ENCODE measurements at regions of chr6 and their contacts with region 1.

Region 1: DNA sequence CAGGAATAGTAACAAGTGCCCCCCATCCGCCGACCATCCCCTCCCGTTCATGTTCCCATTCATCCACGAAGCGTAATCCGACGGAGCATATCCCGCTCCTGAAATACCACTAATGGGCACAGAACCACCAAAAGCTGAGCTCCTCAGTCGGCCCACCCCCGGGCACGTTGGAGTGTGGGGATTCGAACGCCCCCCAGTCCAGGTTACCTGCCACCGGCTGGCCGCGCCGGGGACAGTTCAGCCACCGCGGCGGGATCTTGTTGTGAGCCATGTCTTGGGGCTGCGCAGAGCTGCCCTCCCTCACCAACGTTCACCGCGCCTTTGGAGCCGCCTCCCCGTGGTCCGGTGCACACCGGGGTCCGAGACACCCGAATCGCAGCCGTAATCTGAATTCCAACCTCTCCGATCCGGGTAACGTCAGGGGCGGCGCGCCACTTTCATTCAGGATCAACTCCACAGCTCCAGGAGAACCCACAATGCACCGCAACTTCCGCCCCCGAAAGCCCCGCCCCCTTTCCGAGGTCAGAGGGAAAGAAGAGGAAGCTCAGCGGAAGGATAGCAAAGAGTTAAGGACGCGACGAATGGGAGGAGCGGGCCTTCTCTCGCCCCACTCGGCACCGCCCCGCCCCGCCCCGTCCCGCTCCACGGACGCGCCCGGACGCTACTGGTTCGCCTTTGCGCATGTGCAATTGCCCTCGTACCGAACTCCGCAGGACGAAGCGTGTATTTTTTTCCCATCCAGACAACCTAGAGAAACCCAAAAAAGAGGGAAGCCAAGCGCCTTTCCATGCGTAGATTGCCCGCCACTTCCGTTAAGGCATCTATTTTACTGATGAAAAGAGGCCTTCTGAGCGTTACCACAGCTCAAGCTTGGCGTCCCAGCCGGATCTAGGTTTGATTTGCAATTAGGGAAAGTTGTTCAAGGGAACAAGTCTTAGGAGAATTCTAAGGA is at the start of gene RNGTT:
- DNase-seq: peak; percentile 97
- ATAC-seq: peak; percentile 100
- H3K4me3 ChIP-seq: peak within 1 kb of the TSS; percentile 92 to 94 (median 94)
- H3K4me3 Mint-ChIP-seq: peak within 1 kb of the TSS; percentile 98
- H3K27ac ChIP-seq: peak within 1 kb of the TSS; percentile 64 to 87
- H3K27ac Mint-ChIP-seq: peak within 1 kb of the TSS; percentile 96
- H3K4me1 ChIP-seq: peaks cover 10 to 17% of the 10 kb centered on the region in 2 donors
- H3K4me1 Mint-ChIP-seq: peaks cover 34% of the 10 kb centered on the region
- H3K27me3 ChIP-seq: no peaks in the 10 kb centered on the region
- H3K27me3 Mint-ChIP-seq: no peaks in the 10 kb centered on the region
- CTCF ChIP-seq: no peak
- total RNA-seq, gene RNGTT: 29.1 and 34.0 TPM in 2 replicates

Region 2: GRCh38 chr6:87322304-87323212 is 1640.9 kb before region 1 on chr6 and contains the start of gene SMIM8:
- CTCF ChIA-PET with region 1: no interaction called
- POLR2A ChIA-PET with region 1: no interaction called
- intact Hi-C with region 1: loop called (anchors 1 kb)
- DNase-seq: peak; percentile 87
- ATAC-seq: peak; percentile 100
- H3K4me3 ChIP-seq: peak within 1 kb of the TSS; percentile 78 to 87 (median 81)
- H3K4me3 Mint-ChIP-seq: peak within 1 kb of the TSS; percentile 95
- H3K27ac ChIP-seq: peak within 1 kb of the TSS; percentile 42 to 74
- H3K27ac Mint-ChIP-seq: peak within 1 kb of the TSS; percentile 88
- H3K4me1 ChIP-seq: peaks cover 4 to 13% of the 10 kb centered on the region in 2 donors
- H3K4me1 Mint-ChIP-seq: peaks cover 25% of the 10 kb centered on the region
- H3K27me3 ChIP-seq: no peaks in the 10 kb centered on the region
- H3K27me3 Mint-ChIP-seq: no peaks in the 10 kb centered on the region
- CTCF ChIP-seq: peak; percentile 99
- total RNA-seq, gene SMIM8: 18.7 and 19.1 TPM in 2 replicates

Region 3: DNA sequence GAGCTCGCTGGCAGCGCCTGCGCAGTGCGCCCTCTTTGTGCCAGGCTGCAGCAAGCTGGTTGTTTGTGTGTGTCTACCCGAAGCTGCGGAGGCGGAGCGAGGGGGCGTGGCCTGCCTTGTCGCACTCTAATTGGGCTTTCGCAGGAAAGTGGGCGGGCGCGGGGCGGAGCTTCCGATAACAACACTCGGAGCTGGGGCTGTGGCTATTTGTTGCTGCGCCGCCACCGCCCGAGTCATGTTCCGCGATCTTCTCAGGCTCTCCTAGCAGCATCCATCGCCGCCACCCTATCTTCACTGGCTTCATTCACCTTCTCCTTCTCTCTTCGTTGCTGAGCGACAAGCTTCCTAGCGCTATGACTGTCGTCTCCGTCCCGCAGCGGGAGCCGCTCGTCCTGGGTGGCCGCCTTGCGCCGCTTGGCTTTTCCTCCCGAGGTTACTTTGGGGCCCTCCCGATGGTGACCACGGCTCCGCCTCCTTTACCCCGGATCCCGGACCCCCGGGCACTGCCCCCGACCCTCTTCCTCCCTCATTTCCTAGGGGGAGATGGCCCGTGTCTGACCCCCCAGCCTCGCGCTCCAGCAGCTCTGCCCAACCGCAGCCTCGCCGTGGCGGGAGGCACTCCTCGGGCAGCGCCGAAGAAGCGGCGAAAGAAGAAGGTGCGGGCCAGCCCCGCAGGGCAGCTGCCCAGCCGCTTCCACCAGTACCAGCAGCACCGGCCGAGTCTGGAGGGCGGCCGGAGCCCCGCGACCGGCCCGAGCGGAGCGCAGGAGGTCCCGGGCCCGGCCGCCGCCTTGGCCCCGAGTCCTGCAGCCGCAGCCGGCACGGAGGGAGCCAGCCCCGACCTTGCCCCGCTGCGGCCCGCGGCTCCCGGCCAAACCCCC is 117.4 kb after region 1 on chr6 and contains the start of gene PNRC1:
- CTCF ChIA-PET with region 1: interaction called, 4 read pairs
- POLR2A ChIA-PET with region 1: interaction called, 19 read pairs
- intact Hi-C with region 1: loop called (anchors 1 kb)
- DNase-seq: peak; percentile 100
- ATAC-seq: peak; percentile 76
- H3K4me3 ChIP-seq: peak within 1 kb of the TSS; percentile 81 to 100 (median 98)
- H3K4me3 Mint-ChIP-seq: peak within 1 kb of the TSS; percentile 99
- H3K27ac ChIP-seq: peak within 1 kb of the TSS; percentile 99
- H3K27ac Mint-ChIP-seq: peak within 1 kb of the TSS; percentile 98
- H3K4me1 ChIP-seq: peaks cover 25 to 29% of the 10 kb centered on the region in 2 donors
- H3K4me1 Mint-ChIP-seq: peaks cover 38% of the 10 kb centered on the region
- H3K27me3 ChIP-seq: no peaks in the 10 kb centered on the region
- H3K27me3 Mint-ChIP-seq: no peaks in the 10 kb centered on the region
- CTCF ChIP-seq: no peak
- total RNA-seq, gene PNRC1: 460 and 486 TPM in 2 replicates

Region 4: GRCh38 chr6:90586836-90587638 is 1623.6 kb after region 1 on chr6 and contains the start of gene MAP3K7:
- CTCF ChIA-PET with region 1: no interaction called
- POLR2A ChIA-PET with region 1: no interaction called
- intact Hi-C with region 1: loop called (anchors 5 kb)
- DNase-seq: peak; percentile 97
- ATAC-seq: peak; percentile 85
- H3K4me3 ChIP-seq: peak within 1 kb of the TSS; percentile 91 to 98 (median 96)
- H3K4me3 Mint-ChIP-seq: peak within 1 kb of the TSS; percentile 98
- H3K27ac ChIP-seq: peak within 1 kb of the TSS; percentile 90 to 100
- H3K27ac Mint-ChIP-seq: peak within 1 kb of the TSS; percentile 100
- H3K4me1 ChIP-seq: peaks cover 15 to 30% of the 10 kb centered on the region in 2 donors
- H3K4me1 Mint-ChIP-seq: peaks cover 41% of the 10 kb centered on the region
- H3K27me3 ChIP-seq: peaks cover 0 to 6% (median 2%) of the 10 kb centered on the region in 4 experiments
- H3K27me3 Mint-ChIP-seq: peaks cover 12% of the 10 kb centered on the region
- CTCF ChIP-seq: no peak
- total RNA-seq, gene MAP3K7: 32.8 and 34.4 TPM in 2 replicates